ENCODE measurements at regions of chr12 and their contacts with region 1.

Region 1: DNA sequence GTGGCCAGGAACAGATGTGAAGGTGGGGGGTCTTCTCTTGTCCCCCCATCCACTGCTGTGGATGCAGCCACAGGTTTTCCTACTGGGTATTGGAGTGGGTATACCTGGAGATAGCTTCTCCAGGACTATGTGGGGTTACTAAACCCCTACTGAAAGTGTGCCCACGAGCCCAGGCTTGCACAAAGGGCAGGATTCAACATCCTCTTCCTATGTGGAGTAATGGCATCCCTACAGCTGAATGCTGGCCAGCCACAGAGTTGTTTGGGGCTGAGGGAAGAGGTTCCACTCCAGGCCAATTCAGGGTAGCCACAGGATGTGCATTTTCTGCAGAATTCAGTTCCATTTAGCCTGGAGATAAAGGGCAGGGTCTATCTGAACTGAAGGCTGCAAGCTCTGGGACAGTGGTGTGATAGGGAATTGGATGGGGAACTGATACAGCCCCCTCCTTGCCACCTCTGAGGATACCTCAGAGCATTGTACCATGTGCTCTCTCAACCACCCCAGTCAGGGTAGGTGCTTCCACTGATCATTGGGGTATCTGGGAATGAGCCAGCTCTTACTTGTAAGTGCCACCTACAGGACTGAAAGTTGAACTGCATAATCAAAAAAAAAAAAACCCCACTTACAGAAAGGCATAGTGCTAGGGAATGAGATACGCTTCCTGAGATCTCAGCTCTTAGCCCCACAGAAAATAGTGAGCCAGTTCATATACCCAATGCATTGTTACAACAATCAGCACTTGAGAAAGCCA is 187.1 kb downstream of the KITLG start:
- DNase-seq: peak; percentile 41
- ATAC-seq: peak; percentile 87
- H3K4me3 ChIP-seq: no peak overlapping the region
- H3K27ac ChIP-seq: no peak overlapping the region
- H3K4me1 ChIP-seq: no peaks in the 10 kb centered on the region
- H3K27me3 ChIP-seq: no peaks in the 10 kb centered on the region
- CTCF ChIP-seq: peak; percentile 47
- EP300 ChIP-seq: no peak
- POLR2A ChIP-seq: no peak
- RAD21 ChIP-seq: no peak

Region 2: GRCh38 chr12:88111074-88111652 is 282.0 kb before region 1 on chr12:
- CTCF ChIA-PET with region 1: interaction called, 10 read pairs
- POLR2A ChIA-PET with region 1: no interaction called
- in situ Hi-C with region 1: no loop called
- intact Hi-C with region 1: loop called (anchors 1 kb)
- DNase-seq: peak; percentile 24
- ATAC-seq: no peak
- H3K4me3 ChIP-seq: no peak overlapping the region
- H3K27ac ChIP-seq: no peak overlapping the region
- H3K4me1 ChIP-seq: peaks cover 7% of the 10 kb centered on the region
- H3K27me3 ChIP-seq: no peaks in the 10 kb centered on the region
- CTCF ChIP-seq: peak; percentile 46
- EP300 ChIP-seq: no peak
- POLR2A ChIP-seq: no peak
- RAD21 ChIP-seq: no peak

Region 3: DNA sequence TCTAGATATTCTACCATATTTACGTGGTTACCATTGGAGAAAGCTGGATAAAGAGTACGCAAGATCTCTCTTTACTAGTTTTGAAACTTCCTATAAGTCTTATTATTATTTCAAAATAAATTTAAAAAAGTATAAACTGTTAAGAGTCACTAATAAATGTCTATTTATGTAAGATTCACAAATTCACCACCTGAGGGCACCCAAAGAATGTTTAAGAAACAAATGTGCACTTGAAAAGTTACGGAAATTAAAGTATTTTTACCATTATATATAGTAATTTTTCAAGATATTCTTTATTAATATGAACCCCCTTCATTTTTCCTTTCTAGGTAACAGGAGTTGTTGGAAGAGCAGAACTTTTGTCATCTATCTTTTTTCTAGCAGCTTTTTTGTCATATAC is 239.2 kb before region 1 on chr12:
- CTCF ChIA-PET with region 1: interaction called, 12 read pairs
- POLR2A ChIA-PET with region 1: no interaction called
- in situ Hi-C with region 1: no loop called
- intact Hi-C with region 1: loop called (anchors 1 kb)
- DNase-seq: peak; percentile 16
- ATAC-seq: no peak
- H3K4me3 ChIP-seq: no peak overlapping the region
- H3K27ac ChIP-seq: no peak overlapping the region
- H3K4me1 ChIP-seq: no peaks in the 10 kb centered on the region
- H3K27me3 ChIP-seq: no peaks in the 10 kb centered on the region
- CTCF ChIP-seq: no peak
- EP300 ChIP-seq: no peak
- POLR2A ChIP-seq: no peak
- RAD21 ChIP-seq: no peak

Region 4: GRCh38 chr12:88448337-88448915 is 55.2 kb after region 1 on chr12:
- CTCF ChIA-PET with region 1: no interaction called
- POLR2A ChIA-PET with region 1: no interaction called
- in situ Hi-C with region 1: no loop called
- intact Hi-C with region 1: no loop called
- DNase-seq: no peak
- ATAC-seq: no peak
- H3K4me3 ChIP-seq: no peak overlapping the region
- H3K27ac ChIP-seq: no peak overlapping the region
- H3K4me1 ChIP-seq: no peaks in the 10 kb centered on the region
- H3K27me3 ChIP-seq: no peaks in the 10 kb centered on the region
- CTCF ChIP-seq: no peak
- EP300 ChIP-seq: no peak
- POLR2A ChIP-seq: no peak
- RAD21 ChIP-seq: no peak

Region 5: GRCh38 chr12:88471331-88472045 is 78.3 kb after region 1 on chr12:
- CTCF ChIA-PET with region 1: no interaction called
- POLR2A ChIA-PET with region 1: no interaction called
- in situ Hi-C with region 1: no loop called
- intact Hi-C with region 1: no loop called
- DNase-seq: no peak
- ATAC-seq: no peak
- H3K4me3 ChIP-seq: no peak overlapping the region
- H3K27ac ChIP-seq: no peak overlapping the region
- H3K4me1 ChIP-seq: peaks cover 10% of the 10 kb centered on the region
- H3K27me3 ChIP-seq: no peaks in the 10 kb centered on the region
- CTCF ChIP-seq: no peak
- EP300 ChIP-seq: no peak
- POLR2A ChIP-seq: no peak
- RAD21 ChIP-seq: no peak